ENCODE measurements at regions of chr2 and their contacts with region 1.

Region 1: GRCh38 chr2:43773876-43774613 is at the start of gene DYNC2LI1:
- DNase-seq: peak; percentile 94
- H3K4me3 Mint-ChIP-seq: peak within 1 kb of the TSS; percentile 99
- H3K27ac Mint-ChIP-seq: peak within 1 kb of the TSS; percentile 95
- H3K4me1 Mint-ChIP-seq: peaks cover 18% of the 10 kb centered on the region
- H3K27me3 Mint-ChIP-seq: no peaks in the 10 kb centered on the region
- total RNA-seq, gene DYNC2LI1: 9.8 and 10.8 TPM in 2 replicates

Region 2: DNA sequence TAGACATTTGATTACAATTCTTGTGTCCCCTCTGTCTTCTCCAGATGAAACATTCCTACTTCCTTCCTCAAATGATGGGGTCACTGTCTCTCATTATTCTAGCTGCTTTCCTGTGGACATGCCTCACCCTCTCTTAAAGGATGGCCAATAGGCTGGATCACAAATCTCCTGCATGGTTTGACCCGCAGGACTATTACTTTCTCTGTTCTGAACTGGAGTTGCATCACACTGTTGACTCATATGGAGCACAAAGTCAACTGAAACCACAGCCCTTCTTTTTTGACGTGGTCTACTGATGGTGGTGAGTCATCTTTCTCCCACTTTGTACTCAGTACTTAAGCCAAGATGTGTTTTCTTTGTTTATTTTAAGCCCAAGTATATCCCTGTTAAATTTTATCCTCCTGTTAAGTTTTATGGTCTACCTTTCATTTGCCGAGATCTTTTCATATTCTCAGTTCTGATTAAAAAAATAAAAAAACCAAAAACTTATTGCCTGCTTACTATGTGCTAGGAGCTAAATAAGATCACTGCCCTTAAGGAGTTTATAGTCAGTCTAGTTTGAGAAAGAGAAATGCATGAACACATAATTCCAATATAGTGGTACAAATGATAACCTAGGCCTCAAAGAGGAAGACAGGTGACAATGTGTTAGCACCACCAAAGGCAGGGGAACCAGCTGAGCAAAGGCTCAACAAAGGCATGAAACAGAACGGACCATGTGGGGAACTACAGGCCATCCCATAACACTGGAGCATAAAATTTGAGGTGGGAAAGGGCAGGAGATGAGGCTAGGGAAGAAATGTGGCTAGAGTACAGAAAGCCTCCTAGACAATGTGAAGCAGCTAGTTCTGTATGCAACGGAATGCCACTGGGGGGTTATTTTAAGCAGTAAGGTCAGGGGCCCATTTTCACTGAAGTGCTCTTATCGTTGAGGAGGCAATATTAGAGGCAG is 480.0 kb before region 1 on chr2:
- intact Hi-C with region 1: loop called (anchors 10 kb)
- DNase-seq: peak; percentile 88
- H3K4me3 Mint-ChIP-seq: peak overlapping the region; percentile 49
- H3K27ac Mint-ChIP-seq: peak overlapping the region; percentile 76
- H3K4me1 Mint-ChIP-seq: peaks cover 24% of the 10 kb centered on the region
- H3K27me3 Mint-ChIP-seq: no peaks in the 10 kb centered on the region

Region 3: DNA sequence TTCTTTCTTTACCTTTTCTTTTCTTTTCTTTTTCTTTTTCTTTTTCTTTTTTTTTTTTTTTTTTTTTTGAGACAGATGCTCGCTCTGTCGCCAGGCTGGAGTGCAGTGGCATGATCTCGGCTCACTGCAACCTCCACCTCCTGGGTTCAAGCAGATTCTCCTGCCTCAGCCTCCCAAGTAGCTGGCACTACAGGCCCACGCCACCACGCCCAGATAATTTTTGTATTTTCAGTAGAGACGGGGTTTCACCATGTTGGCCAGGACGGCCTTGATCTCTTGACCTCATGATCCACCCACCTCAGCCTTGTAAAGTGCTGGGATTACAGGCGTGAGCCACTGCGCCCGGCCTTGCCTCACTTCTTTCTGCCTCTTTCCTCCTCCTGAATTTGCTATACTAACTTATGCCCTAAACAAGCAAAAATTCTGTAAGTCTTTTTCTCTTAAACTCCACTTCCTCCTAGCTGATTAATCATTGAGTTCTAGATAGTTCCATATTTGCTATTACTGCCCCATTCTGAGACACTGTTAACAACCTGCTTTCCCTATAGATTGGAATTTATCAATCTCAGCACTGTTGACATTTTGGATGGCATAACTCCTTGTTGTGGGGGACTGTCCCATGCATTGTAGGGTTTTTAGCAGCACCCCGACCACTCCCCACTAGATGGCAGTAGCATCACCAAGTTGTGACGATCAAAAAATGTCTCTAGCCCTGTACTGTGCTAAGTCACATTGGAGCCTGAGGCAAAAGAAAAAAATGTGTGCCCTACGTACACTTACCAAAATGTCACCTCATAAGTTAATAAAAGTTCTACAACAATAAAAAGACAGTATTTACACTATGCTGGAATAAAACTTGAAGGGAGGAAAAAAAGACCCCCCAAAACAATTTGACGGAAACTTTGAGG is 161.8 kb before region 1 on chr2:
- intact Hi-C with region 1: loop called (anchors 5 kb)
- DNase-seq: peak; percentile 91
- H3K4me3 Mint-ChIP-seq: no peak overlapping the region
- H3K27ac Mint-ChIP-seq: no peak overlapping the region
- H3K4me1 Mint-ChIP-seq: peaks cover 2% of the 10 kb centered on the region
- H3K27me3 Mint-ChIP-seq: peaks cover 4% of the 10 kb centered on the region

Region 4: GRCh38 chr2:43637030-43637803 is 136.8 kb before region 1 on chr2 and contains the start of gene PLEKHH2:
- intact Hi-C with region 1: loop called (anchors 5 kb)
- DNase-seq: peak; percentile 95
- H3K4me3 Mint-ChIP-seq: peak within 1 kb of the TSS; percentile 85
- H3K27ac Mint-ChIP-seq: peak within 1 kb of the TSS; percentile 6
- H3K4me1 Mint-ChIP-seq: peaks cover 10% of the 10 kb centered on the region
- H3K27me3 Mint-ChIP-seq: peaks cover 48% of the 10 kb centered on the region
- total RNA-seq, gene PLEKHH2: 0.52 and 0.65 TPM in 2 replicates

Region 5: DNA sequence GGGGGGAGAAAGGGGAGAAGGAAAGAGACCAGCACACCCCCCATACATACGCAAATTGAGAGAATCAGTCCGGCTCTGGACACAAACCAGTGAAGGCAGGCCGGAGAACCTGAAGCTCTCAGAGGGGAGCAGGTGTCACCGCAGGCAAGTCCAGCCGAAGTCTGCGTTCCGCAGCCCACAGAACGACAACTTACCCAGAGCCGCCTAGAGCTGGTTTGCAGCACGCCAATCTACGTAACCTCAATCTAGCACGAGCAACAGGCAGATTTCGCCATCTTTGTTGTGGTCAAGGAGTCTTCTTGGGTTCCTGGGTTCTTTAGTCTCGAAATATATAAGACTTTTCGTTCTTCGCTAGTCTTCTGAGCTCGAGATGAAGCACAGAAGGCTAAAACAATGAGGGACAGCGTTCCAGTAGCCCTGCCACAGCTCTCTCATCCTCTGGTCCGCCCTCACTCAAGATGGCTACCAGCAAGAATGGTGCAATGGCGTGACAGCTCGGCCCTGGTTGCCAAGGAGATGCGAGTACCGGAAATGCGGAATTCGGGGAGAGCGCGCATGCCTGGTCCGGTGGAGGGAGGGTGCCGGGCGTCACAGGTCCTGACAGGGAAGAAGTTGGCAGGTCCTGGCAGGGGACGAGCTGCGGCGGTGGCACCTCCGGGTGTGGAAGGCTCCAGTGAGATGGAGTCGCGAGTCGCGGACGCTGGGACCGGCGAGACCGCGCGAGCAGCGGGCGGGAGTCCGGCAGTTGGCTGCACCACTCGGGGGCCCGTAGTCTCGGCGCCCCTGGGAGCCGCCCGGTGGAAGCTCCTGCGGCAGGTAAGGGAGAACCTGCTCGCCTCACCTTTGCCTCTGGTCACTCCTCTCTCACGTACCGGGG is 587.5 kb after region 1 on chr2 and contains the starts of genes CAMKMT and PREPL:
- intact Hi-C with region 1: loop called (anchors 10 kb)
- DNase-seq: peak; percentile 99
- H3K4me3 Mint-ChIP-seq: peak within 1 kb of the TSS; percentile 89
- H3K27ac Mint-ChIP-seq: peak within 1 kb of the TSS; percentile 100
- H3K4me1 Mint-ChIP-seq: peaks cover 31% of the 10 kb centered on the region
- H3K27me3 Mint-ChIP-seq: peaks cover 2% of the 10 kb centered on the region
- total RNA-seq, gene CAMKMT: 13.1 and 16.2 TPM in 2 replicates
- total RNA-seq, gene PREPL: 32.7 and 33.3 TPM in 2 replicates

Measured in activated CD4-positive, alpha-beta T cell treated with anti-CD3 and anti-CD28 coated beads, Interleukin-2, amount 10 ng/mL, durations not matched to agents 24 days and 14 days (primary cell).